Activated CD8-positive, alpha-beta T cell treated with anti-CD3 and anti-CD28 coated beads for 36 hours (primary cell): ENCODE measurements at regions of chr20 and their contacts with region 1.

Region 1: DNA sequence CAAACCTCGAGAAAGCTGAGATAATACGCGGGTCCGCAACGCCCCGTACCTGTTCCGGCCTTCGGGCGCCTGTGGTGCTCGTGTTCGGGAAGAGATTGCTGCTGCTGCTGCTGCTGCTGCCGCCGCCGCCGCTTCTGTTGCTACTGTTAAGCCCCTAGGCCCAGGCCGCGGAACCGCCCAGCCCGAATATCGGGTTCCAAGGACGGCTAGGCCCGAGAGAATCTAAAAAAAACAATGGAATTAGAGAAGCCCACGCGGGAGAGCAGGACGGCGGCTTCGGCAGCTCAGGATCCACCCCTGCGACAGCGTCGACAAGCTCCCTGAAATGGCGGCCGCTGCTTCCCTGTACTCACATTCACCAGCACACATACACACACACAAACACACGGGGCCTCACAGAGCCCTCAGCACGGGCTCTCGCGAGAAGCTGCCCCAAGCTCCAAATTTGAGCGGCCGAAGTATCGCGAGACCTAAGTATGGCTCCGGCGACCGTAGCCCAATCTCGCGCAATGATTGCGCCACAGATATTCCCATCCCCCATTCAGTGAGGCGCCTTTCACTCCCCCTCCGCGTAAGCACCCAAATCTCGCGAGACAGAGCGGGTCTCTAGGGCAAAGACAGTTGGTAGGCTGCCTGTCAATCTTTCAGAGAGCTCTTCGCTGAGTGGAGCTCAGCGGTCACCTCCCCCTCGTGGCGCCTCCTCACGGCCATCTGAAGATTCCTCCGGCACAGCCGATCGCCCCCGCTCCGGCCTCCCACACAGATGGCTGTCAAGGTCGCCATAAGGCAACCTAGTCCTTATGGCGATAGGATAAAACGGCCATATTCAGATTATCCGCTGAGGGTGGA is at the start of gene RBM39:
- DNase-seq: peak; percentile 100
- ATAC-seq: peak; percentile 89
- H3K4me3 Mint-ChIP-seq: peak within 1 kb of the TSS; percentile 92
- H3K27ac Mint-ChIP-seq: peak within 1 kb of the TSS; percentile 99
- H3K4me1 Mint-ChIP-seq: peaks cover 38% of the 10 kb centered on the region
- H3K27me3 Mint-ChIP-seq: no peaks in the 10 kb centered on the region
- CTCF ChIP-seq: no peak
- total RNA-seq, gene RBM39: 317 to 321 TPM

Region 2: DNA sequence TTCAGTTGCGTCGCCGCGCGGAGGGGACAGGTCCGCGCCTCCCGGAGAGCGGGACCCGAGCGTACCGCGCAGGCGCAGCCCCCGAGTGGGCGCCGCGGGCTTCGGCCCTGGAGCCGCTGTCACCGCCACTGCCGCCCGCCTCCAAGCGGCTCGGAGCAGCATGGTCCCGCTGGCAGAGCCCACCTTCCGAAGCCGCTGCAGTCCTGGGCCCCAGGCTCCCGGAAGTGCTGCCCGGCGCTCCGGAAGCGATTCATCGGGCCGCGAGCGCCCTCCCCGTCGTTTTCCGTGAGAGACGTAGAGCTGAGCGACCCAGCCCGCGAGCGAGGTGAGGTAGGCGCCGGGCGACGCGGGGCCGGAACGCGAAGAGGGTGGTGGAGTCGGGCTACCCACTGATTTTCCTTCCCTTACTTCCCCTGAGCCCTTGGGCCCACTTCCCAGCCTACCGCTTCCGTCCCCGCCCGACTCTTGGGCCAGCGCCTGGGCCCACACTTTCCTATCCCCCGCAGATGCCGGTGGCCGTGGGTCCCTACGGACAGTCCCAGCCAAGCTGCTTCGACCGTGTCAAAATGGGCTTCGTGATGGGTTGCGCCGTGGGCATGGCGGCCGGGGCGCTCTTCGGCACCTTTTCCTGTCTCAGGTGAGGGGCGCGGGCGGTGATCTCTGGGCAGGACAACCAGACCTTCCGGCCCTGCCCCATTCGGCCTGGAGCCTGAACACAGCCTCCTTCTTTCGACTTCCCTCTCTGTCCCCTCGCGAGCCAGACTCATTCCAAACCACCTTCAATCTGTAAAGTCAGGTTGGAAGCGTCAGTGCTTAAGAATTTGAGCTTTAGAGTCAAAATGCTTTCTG is 42.8 kb before region 1 on chr20 and contains the starts of genes NFS1 and ROMO1:
- CTCF ChIA-PET with region 1: interaction called, 7 read pairs
- POLR2A ChIA-PET with region 1: interaction called, 1,214 read pairs
- intact Hi-C with region 1: no loop called
- DNase-seq: peak; percentile 93
- ATAC-seq: peak; percentile 90
- H3K4me3 Mint-ChIP-seq: peak within 1 kb of the TSS; percentile 83
- H3K27ac Mint-ChIP-seq: peak within 1 kb of the TSS; percentile 97
- H3K4me1 Mint-ChIP-seq: peaks cover 33% of the 10 kb centered on the region
- H3K27me3 Mint-ChIP-seq: no peaks in the 10 kb centered on the region
- CTCF ChIP-seq: no peak
- total RNA-seq, gene NFS1: 39.7 to 40.8 TPM
- total RNA-seq, gene ROMO1: 146 to 148 TPM

Region 3: DNA sequence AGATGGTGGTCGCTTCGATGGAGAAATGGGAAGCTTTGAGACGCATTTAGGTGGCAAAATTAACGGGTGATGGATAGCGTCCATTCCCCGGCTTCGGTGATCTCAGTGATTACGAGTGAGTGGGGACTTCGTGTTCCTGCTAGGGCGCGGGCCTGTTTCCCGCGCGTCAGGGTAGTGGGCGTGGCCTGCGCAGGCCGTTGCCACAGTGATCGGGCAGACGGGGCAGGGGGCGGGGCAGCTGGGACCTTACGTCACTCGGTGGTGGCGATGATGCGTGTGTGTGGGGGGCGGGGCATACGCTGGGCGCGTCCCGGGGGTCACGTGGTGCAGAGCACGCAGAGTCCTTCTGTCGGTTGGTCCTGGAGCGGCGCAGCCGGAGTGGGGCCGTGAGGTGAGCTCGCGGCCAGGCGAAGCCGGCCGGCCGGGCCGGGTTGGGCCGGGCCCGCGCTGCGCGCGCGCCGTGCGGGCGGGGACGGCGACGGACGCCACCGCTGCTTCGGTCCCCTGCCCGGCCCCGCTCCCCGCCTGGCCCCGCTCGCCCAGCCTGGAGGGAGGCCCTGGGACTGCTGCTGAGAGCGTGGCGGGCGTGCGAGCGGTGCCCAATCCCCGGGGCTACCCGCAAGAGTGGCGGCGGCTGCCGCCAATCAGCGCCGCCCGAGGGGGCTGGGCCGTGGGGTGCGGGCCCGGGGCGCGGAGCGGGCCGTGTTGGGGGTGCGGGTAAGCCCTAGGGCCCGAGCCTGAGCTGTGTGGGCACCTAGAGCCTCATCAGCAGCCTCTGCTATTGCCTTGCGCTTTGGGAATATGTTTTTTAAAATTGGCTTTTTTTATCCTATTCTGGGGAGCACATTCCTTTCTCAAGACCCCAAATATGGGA is 29.8 kb after region 1 on chr20 and contains the start of gene PHF20:
- CTCF ChIA-PET with region 1: interaction called, 12 read pairs
- POLR2A ChIA-PET with region 1: interaction called, 339 read pairs
- intact Hi-C with region 1: loop called (anchors 2 kb)
- DNase-seq: peak; percentile 100
- ATAC-seq: peak; percentile 89
- H3K4me3 Mint-ChIP-seq: peak within 1 kb of the TSS; percentile 79
- H3K27ac Mint-ChIP-seq: peak within 1 kb of the TSS; percentile 90
- H3K4me1 Mint-ChIP-seq: peaks cover 68% of the 10 kb centered on the region
- H3K27me3 Mint-ChIP-seq: no peaks in the 10 kb centered on the region
- CTCF ChIP-seq: no peak
- total RNA-seq, gene PHF20: 57.9 to 58.8 TPM